ENCODE measurements at regions of chr3 and their contacts with region 1.

Region 1: GRCh38 chr3:51498876-51499738 is 708 bp downstream of the DCAF1 start:
- DNase-seq: peak; percentile 89
- ATAC-seq: peak; percentile 77
- H3K4me3 Mint-ChIP-seq: peak overlapping the region; percentile 84
- H3K27ac Mint-ChIP-seq: peak overlapping the region; percentile 98
- H3K4me1 Mint-ChIP-seq: peaks cover 23% of the 10 kb centered on the region
- H3K27me3 Mint-ChIP-seq: no peaks in the 10 kb centered on the region

Region 2: DNA sequence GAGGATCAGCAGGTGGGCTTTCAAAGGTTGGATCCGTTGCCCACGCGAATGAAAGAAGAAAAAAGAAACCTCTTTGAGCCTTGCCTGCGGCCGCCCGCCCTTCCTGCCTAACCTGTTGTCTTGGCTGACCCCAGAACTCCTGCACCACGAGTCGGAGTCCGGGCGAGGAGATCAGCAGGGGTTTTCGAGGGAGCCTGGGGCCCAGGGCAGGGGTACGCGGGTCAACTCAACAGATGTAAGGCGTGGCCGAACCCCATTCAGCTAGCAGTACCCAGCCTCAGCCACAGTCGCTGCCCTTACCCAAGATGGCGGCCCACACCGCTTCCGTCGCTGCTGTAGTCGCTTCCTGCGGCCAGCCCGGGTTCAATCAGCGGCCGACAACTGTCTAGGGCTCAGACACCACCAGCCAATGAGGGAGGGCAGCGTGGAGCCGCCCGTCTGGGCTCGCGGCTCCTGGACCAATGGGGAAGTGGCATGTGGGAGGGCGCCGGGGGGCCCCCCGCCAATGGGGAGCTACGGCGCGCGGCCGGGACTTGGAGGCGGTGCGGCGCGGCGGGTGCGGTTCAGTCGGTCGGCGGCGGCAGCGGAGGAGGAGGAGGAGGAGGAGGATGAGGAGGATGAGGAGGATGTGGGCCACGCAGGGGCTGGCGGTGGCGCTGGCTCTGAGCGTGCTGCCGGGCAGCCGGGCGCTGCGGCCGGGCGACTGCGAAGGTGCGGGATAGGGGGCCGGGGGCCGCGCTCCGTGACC is 114.2 kb before region 1 on chr3 and contains the start of gene MANF:
- CTCF ChIA-PET with region 1: interaction called, 36 read pairs
- POLR2A ChIA-PET with region 1: interaction called, 18 read pairs
- DNase-seq: peak; percentile 99
- ATAC-seq: peak; percentile 98
- H3K4me3 Mint-ChIP-seq: peak within 1 kb of the TSS; percentile 100
- H3K27ac Mint-ChIP-seq: peak within 1 kb of the TSS; percentile 99
- H3K4me1 Mint-ChIP-seq: peaks cover 54% of the 10 kb centered on the region
- H3K27me3 Mint-ChIP-seq: no peaks in the 10 kb centered on the region
- total RNA-seq, gene MANF: 136 to 140 TPM

Region 3: GRCh38 chr3:51511000-51511399 is 11.9 kb after region 1 on chr3:
- CTCF ChIA-PET with region 1: interaction called, 32 read pairs
- POLR2A ChIA-PET with region 1: interaction called, 6 read pairs
- DNase-seq: no peak
- ATAC-seq: no peak
- H3K4me3 Mint-ChIP-seq: no peak overlapping the region
- H3K27ac Mint-ChIP-seq: no peak overlapping the region
- H3K4me1 Mint-ChIP-seq: peaks cover 23% of the 10 kb centered on the region
- H3K27me3 Mint-ChIP-seq: no peaks in the 10 kb centered on the region

Region 4: DNA sequence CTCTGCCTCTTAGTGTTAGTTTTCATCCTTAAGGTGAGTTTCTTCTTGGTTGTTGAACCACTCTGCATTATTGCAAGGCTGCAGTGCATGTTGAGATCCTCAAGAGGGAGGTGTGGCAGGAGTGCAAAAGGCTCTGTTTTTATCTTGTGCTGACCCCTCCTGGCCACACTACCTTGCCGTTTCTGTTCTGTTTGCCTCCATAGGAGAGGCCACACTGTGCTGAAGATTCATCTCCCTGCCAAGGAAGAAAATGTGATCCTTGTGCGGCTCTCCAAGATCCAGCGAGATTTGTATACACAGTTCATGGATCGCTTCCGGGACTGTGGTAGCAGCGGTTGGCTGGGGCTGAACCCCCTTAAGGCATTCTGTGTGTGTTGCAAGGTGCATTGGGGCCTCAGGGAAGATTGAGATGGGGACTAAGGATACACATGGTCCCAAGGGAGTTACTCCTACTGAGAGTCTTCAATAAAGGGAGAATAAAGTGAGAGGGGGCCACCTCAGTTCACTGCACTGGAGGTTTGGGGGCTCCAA is 138.9 kb after region 1 on chr3:
- CTCF ChIA-PET with region 1: interaction called, 64 read pairs
- POLR2A ChIA-PET with region 1: no interaction called
- DNase-seq: peak; percentile 69
- ATAC-seq: peak; percentile 82
- H3K4me3 Mint-ChIP-seq: no peak overlapping the region
- H3K27ac Mint-ChIP-seq: no peak overlapping the region
- H3K4me1 Mint-ChIP-seq: no peaks in the 10 kb centered on the region
- H3K27me3 Mint-ChIP-seq: no peaks in the 10 kb centered on the region

Region 5: DNA sequence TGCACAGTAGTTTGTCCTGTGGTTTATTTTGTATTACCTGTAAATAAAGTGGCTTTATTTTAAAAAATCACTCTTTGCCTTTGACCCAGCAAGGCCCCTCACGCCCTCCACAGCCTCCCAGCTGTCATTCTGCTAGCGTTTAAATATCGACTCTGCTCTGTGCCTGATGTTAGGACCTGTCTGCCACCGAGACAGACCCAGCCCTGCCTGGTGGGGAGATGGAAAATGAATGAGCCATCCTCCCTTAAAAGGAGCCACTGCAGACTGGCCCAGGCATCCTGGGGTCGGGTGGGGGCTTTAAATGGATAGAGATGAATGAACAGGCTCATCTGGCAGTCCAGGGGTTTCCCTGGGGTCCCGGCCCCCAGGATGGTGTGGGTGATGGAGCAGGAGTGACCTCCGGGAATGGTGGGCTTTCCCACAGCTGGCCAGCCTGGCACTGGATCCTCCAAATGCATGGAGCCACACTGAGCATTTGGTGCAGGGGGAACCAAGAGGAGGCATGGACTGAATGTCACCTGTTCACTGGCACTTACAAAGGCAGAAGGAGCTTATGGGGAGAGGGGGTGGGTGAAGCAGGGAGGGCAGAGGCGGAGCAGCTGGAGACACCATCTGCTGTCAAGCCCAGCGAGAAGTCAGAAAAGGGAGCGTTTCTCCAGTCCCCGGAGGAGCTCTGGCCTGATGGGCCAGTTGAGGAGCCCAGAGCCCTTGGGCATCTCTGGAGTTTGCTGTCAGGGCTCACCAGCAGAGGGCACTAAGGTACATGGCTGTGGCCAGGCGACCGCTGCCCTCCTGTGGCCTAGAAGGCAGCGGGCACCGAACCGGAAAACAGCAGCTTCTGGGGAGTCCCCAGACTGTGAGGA is 219.7 kb after region 1 on chr3:
- CTCF ChIA-PET with region 1: interaction called, 23 read pairs
- POLR2A ChIA-PET with region 1: no interaction called
- DNase-seq: peak; percentile 86
- ATAC-seq: peak; percentile 86
- H3K4me3 Mint-ChIP-seq: no peak overlapping the region
- H3K27ac Mint-ChIP-seq: peak overlapping the region; percentile 36
- H3K4me1 Mint-ChIP-seq: peaks cover 40% of the 10 kb centered on the region
- H3K27me3 Mint-ChIP-seq: no peaks in the 10 kb centered on the region

Measured in activated CD8-positive, alpha-beta T cell treated with anti-CD3 and anti-CD28 coated beads, Interleukin-2, amount 10 ng/mL, durations not matched to agents 7 days and 5 days (primary cell).